A549 (cell line): ENCODE measurements at regions of chr16 and their contacts with region 1.

Region 1: DNA sequence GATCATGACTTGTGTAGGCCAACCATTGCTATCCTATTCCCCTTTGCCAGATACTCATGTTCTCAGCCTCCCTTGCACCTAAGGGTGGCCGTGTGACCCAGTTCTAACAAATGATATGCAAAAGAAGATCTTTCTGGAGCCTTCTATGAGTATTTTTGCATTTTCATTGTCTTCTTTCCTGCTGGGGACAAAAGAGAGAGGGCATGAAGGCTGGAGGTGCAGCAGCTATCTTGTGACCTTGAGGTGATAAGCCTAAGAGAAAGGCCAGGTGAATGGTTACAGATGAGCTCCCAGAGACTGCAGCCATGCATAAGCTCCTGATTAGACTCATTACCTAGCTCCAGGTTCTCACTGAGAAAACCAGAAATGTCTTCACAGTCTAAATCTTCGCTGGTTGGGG is 38.8 kb upstream of the PRKCB start:
- DNase-seq: no peak
- ATAC-seq: no peak
- H3K4me3 ChIP-seq: no peak overlapping the region
- H3K27ac ChIP-seq: no peak overlapping the region
- H3K4me1 ChIP-seq: no peaks in the 10 kb centered on the region
- CTCF ChIP-seq: no peak
- EP300 ChIP-seq: no peak
- POLR2A ChIP-seq: no peak
- RAD21 ChIP-seq: no peak

Region 2: DNA sequence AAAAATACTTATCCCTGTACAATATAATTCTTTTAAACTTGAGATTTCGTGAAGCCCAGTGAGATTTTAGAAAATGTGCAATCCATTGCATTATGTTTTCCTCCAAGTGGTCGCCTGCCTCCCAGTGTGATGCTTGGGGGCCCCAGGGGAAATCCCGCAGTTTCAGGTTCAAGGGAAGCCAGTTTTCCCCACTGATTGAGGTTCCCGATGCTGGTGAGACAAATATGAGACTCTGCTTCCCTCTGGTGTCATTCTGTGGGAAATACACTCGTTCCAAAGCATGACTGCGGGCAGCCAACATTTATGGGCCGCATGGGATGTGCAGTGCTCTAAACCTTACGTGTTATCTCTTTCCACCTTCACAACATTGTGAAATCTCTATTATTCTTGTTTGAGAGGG is 239.7 kb after region 1 on chr16:
- CTCF ChIA-PET with region 1: interaction called, 116 read pairs
- POLR2A ChIA-PET with region 1: no interaction called
- DNase-seq: peak; percentile 48 to 84
- ATAC-seq: peak; percentile 78 to 91
- H3K4me3 ChIP-seq: no peak overlapping the region
- H3K27ac ChIP-seq: no peak overlapping the region
- H3K4me1 ChIP-seq: no peaks in the 10 kb centered on the region
- CTCF ChIP-seq: peak; percentile 80
- EP300 ChIP-seq: no peak
- POLR2A ChIP-seq: no peak
- RAD21 ChIP-seq: peak; percentile 89 to 93